ENCODE measurements at regions of chr13 and their contacts with region 1.

Region 1: DNA sequence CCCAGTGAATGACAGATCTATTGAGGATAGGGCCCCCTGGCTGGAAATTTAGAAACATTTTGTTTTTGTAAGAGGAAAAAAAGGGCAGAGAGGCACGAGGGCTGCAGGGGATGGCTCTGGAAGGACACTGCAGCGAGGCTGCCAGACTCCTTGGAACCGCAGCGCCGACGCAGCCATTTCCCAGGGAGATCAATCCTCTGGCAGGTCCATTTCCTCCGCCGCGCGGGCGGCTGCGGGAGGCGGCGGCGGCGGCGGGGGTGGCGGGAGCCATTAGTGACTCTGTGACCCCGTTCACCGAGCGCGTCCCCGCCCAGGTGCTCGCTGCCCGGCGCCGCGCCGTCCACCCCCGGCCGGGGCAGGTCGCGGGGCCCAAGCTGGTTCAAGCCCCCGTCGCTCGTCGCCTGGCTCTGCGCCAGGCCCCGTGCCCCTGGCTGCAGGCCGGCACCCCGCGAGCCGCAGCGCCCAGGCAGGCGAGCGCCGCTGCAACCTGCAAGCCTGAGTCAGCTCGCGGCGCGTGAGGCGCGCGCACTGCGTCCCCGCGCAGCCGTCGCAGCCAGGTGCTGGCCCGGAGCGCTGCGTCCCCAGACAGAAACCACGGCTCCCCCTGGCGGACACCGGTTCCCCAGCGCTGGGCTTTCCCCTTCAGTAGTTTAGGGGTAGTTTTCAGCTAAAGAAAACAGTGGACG is 192.6 kb downstream of the KATNAL1 start:
- DNase-seq: peak; percentile 95
- H3K4me3 ChIP-seq: peak overlapping the region; percentile 54 to 62
- H3K27ac ChIP-seq: peak overlapping the region in 1 of 2 donors; percentile 62
- H3K4me1 ChIP-seq: peaks cover 19% of the 10 kb centered on the region
- H3K27me3 ChIP-seq: no peaks in the 10 kb centered on the region
- CTCF ChIP-seq: peak; percentile 85 to 95 (median 91)
- POLR2A ChIP-seq: no peak

Region 2: GRCh38 chr13:29508130-29508875 is 606.4 kb before region 1 on chr13:
- intact Hi-C with region 1: loop called (anchors 10 kb)
- DNase-seq: peak; percentile 91
- H3K4me3 ChIP-seq: no peak overlapping the region
- H3K27ac ChIP-seq: no peak overlapping the region
- H3K4me1 ChIP-seq: peaks cover 4% of the 10 kb centered on the region
- H3K27me3 ChIP-seq: no peaks in the 10 kb centered on the region
- CTCF ChIP-seq: peak; percentile 78 to 96 (median 91)
- POLR2A ChIP-seq: no peak

Region 3: GRCh38 chr13:29771247-29771646 is 343.5 kb before region 1 on chr13:
- intact Hi-C with region 1: loop called (anchors 10 kb)
- DNase-seq: no peak
- H3K4me3 ChIP-seq: no peak overlapping the region
- H3K27ac ChIP-seq: no peak overlapping the region
- H3K4me1 ChIP-seq: no peaks in the 10 kb centered on the region
- H3K27me3 ChIP-seq: no peaks in the 10 kb centered on the region
- CTCF ChIP-seq: peak in 2 of 3 experiments; percentile 13 to 45
- POLR2A ChIP-seq: no peak

Measured in testis (tissue), 5 donors.